GM10248 (cell line): ENCODE measurements at regions of chr6 and their contacts with region 1.

Region 1: DNA sequence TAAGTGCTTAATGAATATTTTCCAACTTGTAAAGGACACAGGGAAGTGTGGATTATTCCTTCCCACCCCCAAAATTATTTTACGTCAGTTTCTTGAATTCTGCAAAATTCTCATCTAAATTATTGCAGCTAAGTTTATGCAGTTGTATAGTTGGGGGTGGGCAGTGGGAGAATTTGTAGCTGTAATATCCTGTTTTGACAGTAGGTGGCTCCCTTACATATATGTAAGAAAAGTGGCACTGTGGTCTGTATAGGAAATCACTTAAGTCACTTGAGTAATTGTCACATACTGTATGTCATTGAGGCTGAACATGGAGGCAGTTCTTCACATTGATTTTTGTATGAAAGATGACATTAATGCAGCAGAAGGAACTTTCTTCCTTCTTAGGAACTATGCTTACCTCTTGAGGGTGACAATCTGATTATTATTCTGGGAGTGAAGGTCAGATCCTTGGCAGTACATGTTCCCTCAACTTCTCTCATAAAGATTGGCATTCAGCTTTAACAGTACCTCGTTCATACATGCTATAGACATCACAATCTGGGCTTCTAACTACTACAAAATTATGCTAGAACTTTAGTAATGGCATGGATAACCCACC is 14.7 kb upstream of the CFAP206 start:
- DNase-seq: peak; percentile 38
- CTCF ChIP-seq: peak; percentile 51

Region 2: DNA sequence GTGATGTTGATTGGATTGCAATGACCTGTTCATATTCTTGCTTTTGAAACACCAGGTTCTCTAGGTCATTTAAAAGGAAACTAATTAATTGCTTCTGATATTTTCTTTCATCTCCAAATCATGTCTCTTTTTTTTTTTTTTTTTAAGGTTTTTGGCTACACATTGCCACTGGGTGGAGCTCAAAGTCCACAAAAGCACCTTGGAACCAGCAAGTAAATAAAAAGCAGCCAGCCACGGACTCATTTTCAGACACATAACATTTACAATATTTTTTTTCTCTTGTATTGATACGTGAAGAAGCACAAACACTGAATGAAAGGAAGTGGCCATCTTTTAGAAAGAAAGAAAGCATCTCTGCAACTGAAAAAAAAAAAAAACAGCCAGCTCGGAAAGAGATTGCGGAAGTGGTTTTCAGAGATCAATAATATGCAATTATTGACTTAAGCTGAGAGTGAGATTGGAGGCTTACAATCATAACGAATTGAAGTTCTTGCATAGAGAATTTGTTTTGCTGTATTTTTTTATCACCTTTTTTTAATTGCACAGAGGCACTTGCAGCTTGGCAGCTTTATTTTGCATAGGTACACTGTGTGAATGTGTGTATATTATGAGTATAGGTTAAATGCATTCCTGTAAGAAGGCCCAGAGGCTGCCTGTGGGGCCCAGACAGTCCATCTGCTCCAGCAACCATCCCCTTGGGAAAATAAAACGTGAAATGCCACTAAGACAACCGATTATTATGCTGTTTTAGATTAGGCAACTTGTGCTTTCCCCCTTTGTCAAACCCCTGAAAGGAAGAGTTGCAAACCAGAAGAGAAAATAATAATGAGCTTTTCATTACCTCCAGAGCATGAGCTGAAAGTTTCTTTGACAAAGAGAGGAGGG is 326.4 kb before region 1 on chr6:
- CTCF ChIA-PET with region 1: interaction called, 26 read pairs
- POLR2A ChIA-PET with region 1: no interaction called
- DNase-seq: peak; percentile 60
- CTCF ChIP-seq: peak; percentile 58

Region 3: DNA sequence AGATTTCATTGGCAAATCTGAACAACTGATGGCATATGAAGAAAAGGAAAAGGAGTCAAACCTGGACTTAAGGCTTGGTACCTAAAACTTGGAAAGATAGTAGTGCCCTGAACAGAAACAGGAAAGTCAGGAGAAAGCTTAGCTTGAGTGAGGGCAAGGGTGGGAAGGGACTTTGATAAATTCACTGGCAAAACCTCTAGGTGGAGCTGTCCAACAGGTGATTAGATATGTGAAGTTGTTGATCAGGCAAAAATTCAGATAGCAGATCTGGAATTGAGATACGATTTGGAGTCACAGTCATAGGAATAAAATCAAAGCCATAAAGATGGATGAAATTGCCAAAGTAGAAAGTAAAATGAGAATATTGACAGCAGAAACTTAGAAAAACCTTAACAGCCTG is 253.9 kb before region 1 on chr6:
- CTCF ChIA-PET with region 1: interaction called, 24 read pairs
- POLR2A ChIA-PET with region 1: no interaction called
- DNase-seq: peak; percentile 66
- CTCF ChIP-seq: peak; percentile 71

Region 4: DNA sequence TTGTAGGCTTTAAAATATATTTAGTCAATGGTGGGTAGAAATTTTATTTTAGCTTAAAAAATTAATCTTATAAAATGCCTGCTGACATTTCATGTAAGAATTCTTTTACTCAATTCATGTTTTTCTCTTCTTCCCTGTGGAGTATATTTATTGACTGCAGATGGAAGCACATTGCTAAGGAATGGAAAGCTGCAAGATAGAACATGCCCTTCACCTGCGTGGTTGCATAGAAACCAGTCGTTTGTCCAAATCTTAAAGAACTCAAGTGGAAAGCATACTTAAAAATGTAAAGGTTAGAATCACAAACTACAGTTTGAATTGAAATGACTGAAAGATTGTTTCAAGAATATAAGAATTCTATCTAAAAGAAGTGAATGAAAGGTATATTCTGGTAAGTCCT is 17.8 kb before region 1 on chr6:
- CTCF ChIA-PET with region 1: interaction called, 14 read pairs
- POLR2A ChIA-PET with region 1: no interaction called
- DNase-seq: no peak
- CTCF ChIP-seq: no peak

Region 5: DNA sequence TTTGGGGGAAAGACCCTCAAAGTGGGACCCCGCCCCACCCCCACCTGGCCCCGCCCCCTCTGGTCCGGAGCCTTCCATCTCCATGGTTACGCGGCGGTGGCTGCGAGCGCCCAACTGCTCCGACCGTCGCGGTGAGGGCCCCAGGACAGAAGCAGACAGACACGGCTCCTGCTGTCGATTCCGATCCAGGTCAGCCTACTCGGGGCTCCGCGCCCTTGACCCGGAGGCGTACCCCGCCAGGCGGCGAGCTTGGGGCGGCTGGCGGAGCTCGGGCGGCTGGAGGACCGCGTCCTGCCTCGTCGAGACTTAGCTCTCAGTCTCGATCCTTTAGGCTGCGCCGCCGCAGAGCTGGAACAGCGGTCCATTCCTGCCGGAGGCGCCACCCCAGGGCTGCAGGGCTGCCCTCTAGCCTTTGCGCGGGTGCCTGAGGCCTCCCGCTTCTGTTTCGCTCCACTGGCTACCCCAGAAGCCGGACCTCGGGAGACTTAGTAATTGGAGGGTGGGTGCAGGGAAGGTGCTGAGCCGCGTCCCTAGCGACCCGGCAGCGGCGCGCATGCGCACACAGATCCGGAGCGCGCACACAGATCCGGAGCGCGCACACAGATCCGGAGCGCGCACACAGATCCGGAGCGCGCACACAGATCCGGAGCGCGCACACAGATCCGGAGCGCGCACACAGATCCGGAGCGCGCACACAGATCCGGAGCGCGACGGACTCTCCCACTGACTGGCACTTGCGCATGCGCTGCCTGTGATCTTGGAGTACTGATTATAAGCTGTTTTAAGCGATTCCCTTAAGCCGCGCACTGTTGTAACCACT is 15.0 kb after region 1 on chr6 and contains the start of gene CFAP206:
- CTCF ChIA-PET with region 1: interaction called, 53 read pairs
- POLR2A ChIA-PET with region 1: no interaction called
- DNase-seq: peak; percentile 88
- CTCF ChIP-seq: peak; percentile 19